ENCODE measurements at regions of chr2 and their contacts with region 1.

Region 1: GRCh38 chr2:69565431-69565839 is 78.1 kb downstream of the AAK1 start:
- DNase-seq: peak; percentile 76
- CTCF ChIP-seq: peak; percentile 90

Region 2: GRCh38 chr2:69375494-69376353 is 189.7 kb before region 1 on chr2:
- CTCF ChIA-PET with region 1: interaction called, 18 read pairs
- POLR2A ChIA-PET with region 1: no interaction called
- DNase-seq: peak; percentile 33
- CTCF ChIP-seq: peak; percentile 38

Region 3: DNA sequence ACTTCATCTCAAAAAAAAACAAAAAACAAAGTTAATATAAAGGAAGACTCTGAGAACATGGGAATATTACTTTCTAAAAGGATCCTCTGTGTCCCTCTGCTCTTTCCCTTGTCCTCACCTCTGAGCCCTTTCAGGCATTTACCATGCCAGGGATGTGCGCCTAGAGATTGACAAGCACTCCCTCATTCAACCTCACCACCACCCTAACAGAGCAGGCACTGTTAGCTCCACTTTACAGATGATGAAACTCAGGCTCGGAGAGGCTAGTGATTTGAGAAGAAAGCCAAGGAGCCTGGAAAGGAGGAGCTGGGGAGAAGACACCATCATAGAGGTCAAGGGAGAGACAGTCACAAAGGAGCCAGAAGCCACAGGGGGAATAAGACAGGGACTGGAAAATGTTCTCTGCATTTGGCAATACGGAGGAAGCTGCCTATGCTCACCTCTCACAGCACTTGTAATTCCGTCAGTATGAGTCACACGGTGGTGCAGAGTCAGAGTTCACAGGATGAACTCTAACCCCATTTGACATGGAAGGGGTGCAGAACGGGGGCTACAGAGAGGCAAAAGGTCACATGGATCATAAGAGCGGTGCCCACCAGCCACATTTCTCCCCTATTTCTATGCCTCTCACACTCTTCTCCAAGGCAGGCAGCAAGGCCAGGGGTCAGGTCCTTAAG is 26.4 kb before region 1 on chr2:
- CTCF ChIA-PET with region 1: interaction called, 13 read pairs
- POLR2A ChIA-PET with region 1: no interaction called
- DNase-seq: no peak
- CTCF ChIP-seq: no peak

Region 4: DNA sequence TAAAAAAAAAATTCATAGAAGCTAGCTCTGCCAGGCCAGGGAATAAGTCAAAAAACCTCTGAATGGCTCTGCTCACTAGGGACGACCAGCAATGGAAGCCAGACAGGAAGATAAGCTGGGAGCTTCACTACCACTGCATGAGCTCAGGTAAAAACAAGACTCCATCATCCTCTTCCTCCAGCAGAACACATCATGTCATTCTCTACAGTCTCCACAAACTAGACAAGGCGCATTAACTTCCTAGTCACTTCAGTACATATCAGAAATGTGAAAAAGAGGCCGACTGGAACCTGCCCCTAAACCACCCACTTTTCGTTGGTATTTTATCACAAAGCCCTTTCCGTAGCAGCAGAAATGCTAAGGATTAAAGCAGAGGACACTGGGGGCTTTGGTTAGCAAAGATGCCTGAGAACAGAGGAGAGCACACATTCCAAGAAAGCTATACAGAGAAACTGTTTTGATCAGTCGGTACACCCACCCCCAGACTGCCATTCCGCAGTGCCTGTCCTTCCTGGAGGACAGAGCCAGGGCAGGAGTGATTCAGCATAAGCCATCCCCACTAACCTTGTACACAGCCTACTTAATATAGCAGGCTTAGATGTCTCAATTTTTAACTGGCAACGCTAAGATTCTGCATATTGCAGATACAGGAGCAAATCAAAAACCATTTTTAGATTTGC is 24.7 kb after region 1 on chr2:
- CTCF ChIA-PET with region 1: interaction called, 195 read pairs
- POLR2A ChIA-PET with region 1: no interaction called
- DNase-seq: no peak
- CTCF ChIP-seq: no peak

Region 5: DNA sequence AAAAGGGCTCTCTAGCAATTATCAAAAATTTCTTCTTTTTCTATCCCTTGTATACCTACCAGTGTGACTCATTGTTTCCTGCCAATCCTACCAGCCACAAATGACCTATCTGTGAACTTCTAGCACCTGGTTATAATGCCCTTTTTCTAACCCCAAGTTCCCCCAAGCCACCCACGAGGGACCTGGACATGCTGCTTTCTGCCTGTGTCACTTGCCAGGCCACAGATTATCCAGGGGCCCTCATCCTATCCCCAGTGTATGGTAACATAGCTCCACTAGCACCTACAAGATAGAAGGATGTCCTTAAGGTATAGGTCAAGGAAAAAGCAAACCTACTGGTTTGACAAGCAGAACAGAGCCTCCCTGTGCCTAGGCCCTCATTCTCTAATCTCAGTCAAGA is 51.3 kb after region 1 on chr2:
- CTCF ChIA-PET with region 1: interaction called, 11 read pairs
- POLR2A ChIA-PET with region 1: no interaction called
- DNase-seq: peak; percentile 34
- CTCF ChIP-seq: no peak

Region 6: GRCh38 chr2:69704446-69704845 is 139.0 kb after region 1 on chr2:
- CTCF ChIA-PET with region 1: interaction called, 14 read pairs
- POLR2A ChIA-PET with region 1: no interaction called
- DNase-seq: no peak
- CTCF ChIP-seq: no peak

Measured in GM10248 (cell line).